Activated B cell treated with CpG ODN at 0.5 μM for 24 hours (primary cell): ENCODE measurements at regions of chr11 and their contacts with region 1.

Region 1: GRCh38 chr11:13955971-13956421 is 6.5 kb upstream of the SPON1 start:
- DNase-seq: no peak
- ATAC-seq: peak; percentile 65
- H3K4me3 Mint-ChIP-seq: no peak overlapping the region
- H3K27ac Mint-ChIP-seq: no peak overlapping the region
- H3K4me1 Mint-ChIP-seq: no peaks in the 10 kb centered on the region
- H3K27me3 Mint-ChIP-seq: peaks cover 25% of the 10 kb centered on the region
- CTCF ChIP-seq: peak; percentile 16

Region 2: DNA sequence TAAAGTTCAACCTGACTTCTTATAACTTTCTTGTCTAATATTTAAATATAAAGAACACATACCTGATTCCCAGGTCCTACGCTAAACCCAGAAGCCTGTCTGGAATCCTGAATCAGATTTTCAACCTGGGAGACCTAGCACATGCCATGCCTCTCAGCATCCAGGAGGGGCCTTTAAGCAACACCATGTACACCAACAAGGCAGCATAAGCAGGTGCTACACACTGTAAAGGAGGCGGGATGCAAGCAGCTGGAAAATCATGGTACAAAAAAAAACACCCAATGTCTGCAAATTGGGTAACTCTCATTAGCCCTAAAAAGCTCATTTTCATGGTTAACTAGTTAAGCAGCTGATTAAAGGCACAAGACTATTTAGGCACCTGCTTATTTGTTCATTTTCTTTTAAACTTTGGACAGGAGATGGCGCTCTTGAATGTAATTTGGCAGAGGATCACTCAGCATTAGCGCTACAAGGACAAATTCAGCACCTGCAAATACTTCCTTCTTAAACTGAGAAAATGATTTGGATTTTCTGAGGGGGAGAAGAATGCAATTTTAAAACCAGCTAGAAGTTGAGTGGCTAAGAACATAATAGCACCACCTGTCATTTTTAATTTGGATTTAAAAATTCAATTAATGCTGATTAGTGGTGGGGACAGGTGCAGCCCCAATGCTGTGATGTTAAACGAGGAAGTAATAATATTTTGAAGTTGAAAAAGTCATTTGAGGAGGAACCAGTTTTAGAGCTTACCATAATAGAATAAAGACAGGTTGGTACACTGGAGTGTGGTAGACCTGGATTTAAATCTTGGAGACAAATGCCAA is 183.6 kb before region 1 on chr11:
- CTCF ChIA-PET with region 1: interaction called, 4 read pairs
- POLR2A ChIA-PET with region 1: no interaction called
- intact Hi-C with region 1: loop called (anchors 2 kb)
- DNase-seq: no peak
- ATAC-seq: peak; percentile 57
- H3K4me3 Mint-ChIP-seq: no peak overlapping the region
- H3K27ac Mint-ChIP-seq: no peak overlapping the region
- H3K4me1 Mint-ChIP-seq: peaks cover 6% of the 10 kb centered on the region
- H3K27me3 Mint-ChIP-seq: peaks cover 15% of the 10 kb centered on the region
- CTCF ChIP-seq: no peak

Region 3: DNA sequence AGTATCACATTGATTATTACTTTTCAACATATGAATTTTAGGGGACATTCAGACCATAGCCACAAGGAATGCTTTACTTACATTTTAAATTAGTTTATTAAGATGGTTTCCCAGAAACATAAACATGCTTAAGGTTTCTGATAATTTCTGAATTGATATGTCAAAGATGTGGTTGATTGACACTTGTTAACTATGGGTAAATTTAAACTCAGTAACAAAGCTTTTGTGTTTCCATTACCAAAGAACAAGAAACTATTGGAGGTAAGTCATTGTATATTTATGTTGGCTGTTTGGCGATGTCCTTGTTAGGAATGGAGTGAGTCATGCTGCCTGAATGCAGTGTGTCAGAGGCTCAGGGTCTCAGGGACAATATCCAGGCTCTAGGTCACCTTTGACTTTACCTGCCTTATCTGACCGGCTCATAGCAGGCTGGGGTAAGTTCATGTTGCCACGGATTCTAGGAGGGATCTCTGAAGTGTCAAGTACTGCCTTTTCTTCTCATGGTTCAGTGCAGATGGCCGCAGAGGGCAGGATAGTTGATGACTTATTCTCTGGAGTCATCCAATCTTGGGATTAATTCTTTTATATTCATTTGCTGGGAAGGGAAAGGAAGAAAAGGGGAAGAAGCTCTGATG is 59.6 kb after region 1 on chr11:
- CTCF ChIA-PET with region 1: no interaction called
- POLR2A ChIA-PET with region 1: no interaction called
- intact Hi-C with region 1: no loop called
- DNase-seq: no peak
- ATAC-seq: no peak
- H3K4me3 Mint-ChIP-seq: no peak overlapping the region
- H3K27ac Mint-ChIP-seq: no peak overlapping the region
- H3K4me1 Mint-ChIP-seq: no peaks in the 10 kb centered on the region
- H3K27me3 Mint-ChIP-seq: peaks cover 6% of the 10 kb centered on the region
- CTCF ChIP-seq: no peak